ENCODE measurements at regions of chr4 and their contacts with region 1.

Region 1: GRCh38 chr4:31045724-31046318 is 325.7 kb downstream of the PCDH7 start:
- DNase-seq: peak; percentile 14
- H3K4me3 ChIP-seq: no peak overlapping the region
- H3K27ac ChIP-seq: no peak overlapping the region
- H3K4me1 ChIP-seq: no peaks in the 10 kb centered on the region
- H3K27me3 ChIP-seq: no peaks in the 10 kb centered on the region
- CTCF ChIP-seq: peak; percentile 59 to 71

Region 2: GRCh38 chr4:29131304-29131703 is 1914.5 kb before region 1 on chr4:
- CTCF ChIA-PET with region 1: no interaction called
- dilution Hi-C with region 1: no loop called
- in situ Hi-C with region 1: no loop called
- intact Hi-C with region 1: no loop called
- DNase-seq: no peak
- H3K4me3 ChIP-seq: no peak overlapping the region
- H3K27ac ChIP-seq: no peak overlapping the region
- H3K4me1 ChIP-seq: no peaks in the 10 kb centered on the region
- H3K27me3 ChIP-seq: no peaks in the 10 kb centered on the region
- CTCF ChIP-seq: no peak

Region 3: DNA sequence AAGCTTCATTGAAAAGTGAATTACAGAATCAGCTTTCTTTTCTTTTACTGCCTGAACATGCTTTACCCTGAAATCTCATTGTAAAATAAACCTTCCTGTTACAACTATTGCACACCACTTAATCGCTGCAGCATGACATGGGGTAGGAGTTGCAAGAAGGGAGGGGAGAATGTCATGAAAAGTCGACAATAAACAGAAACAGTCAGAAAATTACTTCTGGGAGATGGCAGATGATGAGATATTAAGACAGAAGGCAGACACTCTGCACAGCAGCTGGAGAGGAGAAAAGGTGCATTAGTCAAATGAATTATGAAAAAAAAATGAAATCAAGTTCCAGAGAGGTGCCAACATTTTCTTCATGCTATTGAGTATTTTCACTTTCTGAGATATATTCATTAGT is 38.0 kb before region 1 on chr4:
- CTCF ChIA-PET with region 1: no interaction called
- dilution Hi-C with region 1: no loop called
- in situ Hi-C with region 1: no loop called
- intact Hi-C with region 1: no loop called
- DNase-seq: no peak
- H3K4me3 ChIP-seq: no peak overlapping the region
- H3K27ac ChIP-seq: no peak overlapping the region
- H3K4me1 ChIP-seq: no peaks in the 10 kb centered on the region
- H3K27me3 ChIP-seq: no peaks in the 10 kb centered on the region
- CTCF ChIP-seq: no peak

Region 4: GRCh38 chr4:31104577-31104976 is 58.8 kb after region 1 on chr4:
- CTCF ChIA-PET with region 1: no interaction called
- dilution Hi-C with region 1: no loop called
- in situ Hi-C with region 1: no loop called
- intact Hi-C with region 1: no loop called
- DNase-seq: no peak
- H3K4me3 ChIP-seq: no peak overlapping the region
- H3K27ac ChIP-seq: no peak overlapping the region
- H3K4me1 ChIP-seq: no peaks in the 10 kb centered on the region
- H3K27me3 ChIP-seq: no peaks in the 10 kb centered on the region
- CTCF ChIP-seq: no peak

Region 5: GRCh38 chr4:31674313-31674947 is 628.6 kb after region 1 on chr4:
- CTCF ChIA-PET with region 1: no interaction called
- dilution Hi-C with region 1: no loop called
- in situ Hi-C with region 1: no loop called
- intact Hi-C with region 1: loop called (anchors 5 kb)
- DNase-seq: no peak
- H3K4me3 ChIP-seq: no peak overlapping the region
- H3K27ac ChIP-seq: no peak overlapping the region
- H3K4me1 ChIP-seq: no peaks in the 10 kb centered on the region
- H3K27me3 ChIP-seq: no peaks in the 10 kb centered on the region
- CTCF ChIP-seq: peak; percentile 39 to 73

Region 6: GRCh38 chr4:31995943-31996901 is 950.4 kb after region 1 on chr4:
- CTCF ChIA-PET with region 1: no interaction called
- dilution Hi-C with region 1: no loop called
- in situ Hi-C with region 1: no loop called
- intact Hi-C with region 1: no loop called
- DNase-seq: no peak
- H3K4me3 ChIP-seq: no peak overlapping the region
- H3K27ac ChIP-seq: no peak overlapping the region
- H3K4me1 ChIP-seq: no peaks in the 10 kb centered on the region
- H3K27me3 ChIP-seq: no peaks in the 10 kb centered on the region
- CTCF ChIP-seq: no peak

Measured in mammary epithelial cell (primary cell).